ENCODE measurements at regions of chr4 and their contacts with region 1.

Region 1: DNA sequence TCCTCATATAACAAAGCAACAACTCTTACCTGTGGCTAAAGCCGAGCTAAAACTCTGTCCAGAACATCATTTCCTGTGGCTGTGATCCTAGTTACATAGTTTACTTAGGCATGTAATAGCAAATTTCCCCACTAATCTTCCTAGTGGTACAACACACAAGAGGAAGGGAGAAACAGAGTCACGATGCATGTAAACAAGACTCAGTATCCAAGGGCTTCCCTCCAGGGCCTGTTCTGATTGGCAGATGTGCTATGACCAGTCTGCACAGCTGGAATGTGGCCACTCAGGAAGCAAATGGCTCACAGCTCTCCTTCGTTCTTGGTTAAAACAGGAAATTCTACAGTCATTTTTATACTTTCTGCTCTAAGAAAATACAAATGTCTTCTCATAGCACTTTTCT is 49.2 kb upstream of the PRSS48 start:
- DNase-seq: peak; percentile 32 to 69
- ATAC-seq: peak; percentile 72 to 90 (median 88)
- H3K4me3 ChIP-seq: peak overlapping the region in 9 of 10 donors; percentile 1 to 48 (median 41)
- H3K27ac ChIP-seq: peak overlapping the region; percentile 37 to 79 (median 66)
- H3K4me1 ChIP-seq: peaks cover 3 to 59% (median 38%) of the 10 kb centered on the region in 9 donors
- H3K27me3 ChIP-seq: no peaks in the 10 kb centered on the region
- CTCF ChIP-seq: no peak

Region 2: GRCh38 chr4:151169223-151169622 is 58.5 kb before region 1 on chr4:
- intact Hi-C with region 1: loop called in 1 of 10 experiments (anchors 5 kb)
- DNase-seq: peak; percentile 46 to 77
- ATAC-seq: peak; percentile 91 to 96 (median 92)
- H3K4me3 ChIP-seq: no peak overlapping the region
- H3K27ac ChIP-seq: peak overlapping the region in 7 of 10 donors; percentile 9 to 70 (median 45)
- H3K4me1 ChIP-seq: peaks cover 0 to 63% (median 27%) of the 10 kb centered on the region in 9 donors
- H3K27me3 ChIP-seq: no peaks in the 10 kb centered on the region
- CTCF ChIP-seq: no peak

Measured in heart right ventricle (tissue), 16 donors.